ENCODE measurements at regions of chr2 and their contacts with region 1.

Region 1: DNA sequence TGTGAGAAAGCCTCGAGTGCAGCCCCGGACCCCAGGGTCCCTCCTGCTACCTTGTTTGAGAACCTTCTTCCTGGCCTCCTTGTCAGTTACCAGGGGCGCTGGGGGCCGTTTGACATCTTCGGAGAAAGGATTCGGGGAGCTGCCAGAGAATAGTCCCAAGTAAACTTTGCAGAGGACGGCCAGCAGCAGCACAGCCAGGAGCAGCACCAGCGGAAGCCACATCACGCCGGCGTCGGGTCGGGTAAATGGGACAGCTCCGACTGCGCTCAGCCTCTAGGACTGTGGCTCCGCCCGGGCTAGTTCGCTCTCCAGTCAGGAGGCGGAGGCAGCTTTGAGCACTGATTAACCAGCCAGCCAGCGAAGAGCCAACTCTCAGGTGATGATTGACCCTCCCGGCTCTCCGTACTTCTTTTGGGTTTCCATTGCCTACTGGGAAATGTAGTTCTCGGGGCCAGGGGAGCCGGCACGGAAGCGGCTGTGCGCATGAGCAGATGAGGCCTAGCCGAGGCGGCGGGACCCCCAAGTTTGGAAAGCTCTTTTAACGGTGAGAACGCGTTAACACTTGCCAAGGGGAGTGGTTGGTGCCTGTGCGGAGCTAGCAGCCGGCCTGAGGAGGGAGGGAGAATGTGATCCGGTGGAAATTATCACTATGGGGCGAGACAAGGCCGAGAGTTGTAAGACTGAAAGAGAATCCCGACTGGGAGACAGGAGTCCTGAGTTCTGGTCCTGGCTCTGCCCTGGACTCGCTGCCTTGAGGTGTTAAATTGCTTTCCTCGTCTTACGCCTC is at the starts of genes ELMOD3 and RETSAT:
- DNase-seq: peak; percentile 100
- H3K4me3 Mint-ChIP-seq: peak within 1 kb of the TSS; percentile 97
- H3K27ac Mint-ChIP-seq: peak within 1 kb of the TSS; percentile 98
- H3K4me1 Mint-ChIP-seq: peaks cover 10% of the 10 kb centered on the region
- H3K27me3 Mint-ChIP-seq: no peaks in the 10 kb centered on the region
- CTCF ChIP-seq: no peak
- total RNA-seq, gene ELMOD3: 16.2 and 16.7 TPM in 2 replicates
- total RNA-seq, gene RETSAT: 59.2 and 60.4 TPM in 2 replicates

Region 2: GRCh38 chr2:85327822-85328617 is 26.5 kb before region 1 on chr2 and contains the start of gene TGOLN2:
- CTCF ChIA-PET with region 1: interaction called, 4 read pairs
- POLR2A ChIA-PET with region 1: interaction called, 121 read pairs
- intact Hi-C with region 1: loop called (anchors 1 kb)
- DNase-seq: peak; percentile 92
- H3K4me3 Mint-ChIP-seq: peak within 1 kb of the TSS; percentile 82
- H3K27ac Mint-ChIP-seq: peak within 1 kb of the TSS; percentile 94
- H3K4me1 Mint-ChIP-seq: peaks cover 16% of the 10 kb centered on the region
- H3K27me3 Mint-ChIP-seq: no peaks in the 10 kb centered on the region
- CTCF ChIP-seq: no peak
- total RNA-seq, gene TGOLN2: 62.9 and 65.5 TPM in 2 replicates

Region 3: DNA sequence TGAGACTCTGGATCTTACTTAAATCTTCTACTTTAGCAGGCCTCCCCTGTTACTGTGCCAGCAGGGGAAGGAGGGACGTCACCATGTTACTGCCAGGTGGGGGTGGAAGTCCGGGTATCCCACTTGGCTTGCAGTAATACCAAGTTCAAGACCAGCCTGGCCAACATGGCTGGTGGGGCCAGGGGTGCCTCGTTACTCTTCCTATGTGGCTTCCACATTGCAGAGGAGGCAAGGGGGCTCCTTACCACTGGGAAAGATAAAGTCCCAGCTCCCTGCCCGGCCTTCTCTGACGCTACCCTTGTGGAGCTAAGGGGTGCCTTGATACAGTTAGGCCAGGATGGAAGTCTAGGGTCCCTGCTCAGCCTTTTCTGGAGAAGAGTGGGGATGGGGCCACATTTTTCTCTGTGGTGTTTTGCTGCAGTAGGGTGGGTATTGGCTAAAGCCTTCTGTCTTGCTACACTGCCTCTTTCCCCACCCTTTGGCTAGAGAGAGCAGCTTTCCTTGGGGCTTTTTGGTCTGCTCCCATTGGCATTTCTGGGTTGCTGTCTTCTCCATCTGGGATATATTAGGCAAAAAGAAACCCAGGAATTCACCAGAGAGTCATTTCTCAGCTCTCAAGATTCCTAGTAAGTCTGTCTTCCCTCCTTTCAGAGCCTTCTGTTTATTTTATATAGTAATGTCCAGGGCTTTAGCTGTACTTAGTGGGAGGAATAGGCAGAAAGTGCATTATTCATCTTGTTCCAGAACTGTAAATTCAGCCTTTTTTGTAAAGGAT is 22.0 kb after region 1 on chr2:
- CTCF ChIA-PET with region 1: interaction called, 3 read pairs
- POLR2A ChIA-PET with region 1: interaction called, 16 read pairs
- intact Hi-C with region 1: no loop called
- DNase-seq: no peak
- H3K4me3 Mint-ChIP-seq: no peak overlapping the region
- H3K27ac Mint-ChIP-seq: no peak overlapping the region
- H3K4me1 Mint-ChIP-seq: peaks cover 9% of the 10 kb centered on the region
- H3K27me3 Mint-ChIP-seq: no peaks in the 10 kb centered on the region
- CTCF ChIP-seq: no peak

Region 4: DNA sequence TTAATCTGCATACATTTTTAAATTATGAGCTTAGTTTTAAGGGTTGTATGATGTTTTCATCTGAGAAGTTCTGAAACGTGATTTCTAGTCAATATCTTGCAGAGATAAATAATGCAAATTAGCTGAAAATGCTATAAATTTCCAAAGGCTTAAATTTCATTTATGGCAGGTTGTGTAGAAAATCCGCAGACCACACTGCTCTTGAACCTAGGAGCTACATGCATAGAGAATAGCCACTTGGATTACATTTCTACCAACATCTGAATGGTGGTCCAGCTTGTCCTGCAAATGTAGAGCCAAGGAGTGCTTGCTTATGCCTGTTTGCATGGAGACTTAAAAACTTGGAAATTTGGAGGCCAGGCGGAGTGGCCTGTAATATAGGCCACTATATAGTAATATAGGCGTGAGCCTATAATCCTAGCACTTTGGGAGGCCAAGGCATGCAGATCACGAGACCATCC is 191.3 kb after region 1 on chr2:
- CTCF ChIA-PET with region 1: no interaction called
- POLR2A ChIA-PET with region 1: interaction called, 36 read pairs
- intact Hi-C with region 1: loop called (anchors 5 kb)
- DNase-seq: no peak
- H3K4me3 Mint-ChIP-seq: no peak overlapping the region
- H3K27ac Mint-ChIP-seq: no peak overlapping the region
- H3K4me1 Mint-ChIP-seq: peaks cover 37% of the 10 kb centered on the region
- H3K27me3 Mint-ChIP-seq: no peaks in the 10 kb centered on the region
- CTCF ChIP-seq: no peak

Region 5: GRCh38 chr2:85595301-85596025 is 241.0 kb after region 1 on chr2 and contains the start of gene RNF181:
- CTCF ChIA-PET with region 1: no interaction called
- POLR2A ChIA-PET with region 1: interaction called, 18 read pairs
- intact Hi-C with region 1: no loop called
- DNase-seq: peak; percentile 99
- H3K4me3 Mint-ChIP-seq: peak within 1 kb of the TSS; percentile 98
- H3K27ac Mint-ChIP-seq: peak within 1 kb of the TSS; percentile 98
- H3K4me1 Mint-ChIP-seq: peaks cover 19% of the 10 kb centered on the region
- H3K27me3 Mint-ChIP-seq: no peaks in the 10 kb centered on the region
- CTCF ChIP-seq: no peak
- total RNA-seq, gene RNF181: 125 and 215 TPM in 2 replicates

Region 6: GRCh38 chr2:85611705-85612587 is 257.5 kb after region 1 on chr2 and contains the start of gene C2orf68:
- CTCF ChIA-PET with region 1: no interaction called
- POLR2A ChIA-PET with region 1: interaction called, 12 read pairs
- intact Hi-C with region 1: no loop called
- DNase-seq: peak; percentile 83
- H3K4me3 Mint-ChIP-seq: peak within 1 kb of the TSS; percentile 83
- H3K27ac Mint-ChIP-seq: peak within 1 kb of the TSS; percentile 68
- H3K4me1 Mint-ChIP-seq: peaks cover 4% of the 10 kb centered on the region
- H3K27me3 Mint-ChIP-seq: no peaks in the 10 kb centered on the region
- CTCF ChIP-seq: no peak
- total RNA-seq, gene C2orf68: 34.3 and 35.5 TPM in 2 replicates